AG04450 (cell line): ENCODE measurements at regions of chr7 and their contacts with region 1.

Region 1: DNA sequence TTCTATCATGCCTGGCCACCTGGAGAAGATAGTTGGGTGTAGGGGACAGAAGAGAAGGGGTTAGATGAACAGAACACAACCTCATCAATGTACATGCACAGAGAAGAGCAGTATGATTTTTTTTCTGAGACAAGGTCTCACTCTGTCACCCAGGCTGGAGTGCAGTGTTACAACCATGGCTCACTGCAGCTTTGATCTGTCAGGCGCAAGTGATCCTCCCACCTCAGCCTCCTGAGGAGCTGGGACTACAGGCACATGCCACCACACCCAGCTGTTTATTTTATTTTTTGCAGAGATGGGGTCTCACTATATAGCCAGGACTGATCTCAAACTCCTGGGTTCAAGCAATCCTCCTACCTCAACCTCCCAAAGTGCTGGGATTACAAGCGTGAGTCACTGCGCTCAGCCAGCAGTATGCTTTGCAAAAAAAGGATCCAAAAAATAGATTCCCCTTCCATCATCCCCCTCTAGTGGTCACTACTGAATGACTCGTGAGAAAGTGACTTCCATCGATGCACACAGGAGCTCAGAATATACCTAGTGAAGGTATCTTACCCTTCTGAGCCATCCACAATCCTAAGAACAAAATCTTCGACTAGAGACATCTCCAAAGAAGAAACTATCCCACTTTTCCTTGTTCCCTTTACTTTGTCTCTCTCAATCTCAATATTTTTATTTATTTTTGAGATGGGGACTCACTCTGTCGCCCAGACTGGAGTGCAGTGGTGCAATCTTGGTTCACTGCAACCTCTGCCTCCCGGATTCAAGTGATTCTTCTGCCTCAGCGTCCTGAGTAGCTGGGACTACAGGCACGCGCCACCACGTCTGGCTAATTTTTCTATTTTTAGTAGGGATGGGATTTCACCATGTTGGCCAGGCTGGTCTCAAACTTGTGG is 21.0 kb downstream of the ZCWPW1 start:
- DNase-seq: peak; percentile 41
- H3K4me3 ChIP-seq: no peak overlapping the region
- H3K27ac ChIP-seq: no peak overlapping the region
- H3K27me3 ChIP-seq: peaks cover 29% of the 10 kb centered on the region
- CTCF ChIP-seq: peak; percentile 83

Region 2: DNA sequence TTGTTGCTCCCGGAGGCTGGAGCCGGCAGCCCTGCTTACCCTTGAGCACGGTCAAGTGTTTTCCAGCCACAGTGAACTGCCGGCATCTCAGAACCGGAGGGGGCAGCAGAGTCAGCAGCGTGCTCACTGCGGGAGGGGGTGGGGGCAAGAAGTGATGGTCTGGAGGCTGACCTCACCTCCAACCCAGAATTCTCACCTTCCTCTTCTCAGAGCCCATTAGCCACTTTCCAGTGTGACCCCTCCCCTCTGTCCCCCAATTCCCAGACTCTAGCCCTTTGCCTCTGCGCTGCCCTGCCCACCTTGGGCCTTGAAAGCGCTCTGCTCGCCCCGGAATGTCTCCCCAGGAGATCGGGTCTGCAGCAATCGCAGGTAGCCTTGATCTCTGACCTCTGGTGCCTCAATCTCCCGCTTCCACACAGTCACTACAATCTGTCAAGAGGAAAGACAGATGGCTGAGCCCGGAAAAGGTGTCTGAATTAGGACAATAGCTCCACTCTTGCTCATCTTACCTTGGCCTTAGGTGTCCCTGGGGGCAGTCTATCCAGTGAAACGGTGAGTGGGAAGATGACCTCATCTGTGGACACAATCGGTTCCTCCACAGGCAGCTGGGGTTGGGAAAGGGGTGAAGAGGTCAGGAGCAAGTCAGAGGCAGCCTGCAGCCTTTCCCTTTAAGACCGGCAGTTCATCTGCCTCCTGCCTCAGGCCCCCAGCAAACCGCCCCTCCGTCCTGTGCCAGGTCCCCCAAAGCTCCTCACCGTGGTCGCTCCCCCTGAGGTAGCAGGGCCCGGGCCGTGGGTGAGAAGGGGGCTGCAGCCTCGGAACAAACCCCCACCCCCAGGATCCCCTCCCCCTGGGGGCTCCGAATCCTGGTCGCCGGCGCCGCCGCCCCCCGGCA is 250.0 kb before region 1 on chr7:
- CTCF ChIA-PET with region 1: no interaction called
- POLR2A ChIA-PET with region 1: no interaction called
- DNase-seq: no peak
- H3K4me3 ChIP-seq: peak overlapping the region; percentile 69
- H3K27ac ChIP-seq: peak overlapping the region; percentile 39
- H3K27me3 ChIP-seq: no peaks in the 10 kb centered on the region
- CTCF ChIP-seq: peak; percentile 37

Region 3: GRCh38 chr7:100167921-100168323 is 239.6 kb before region 1 on chr7:
- CTCF ChIA-PET with region 1: interaction called, 12 read pairs
- POLR2A ChIA-PET with region 1: no interaction called
- DNase-seq: no peak
- H3K4me3 ChIP-seq: peak overlapping the region; percentile 63
- H3K27ac ChIP-seq: no peak overlapping the region
- H3K27me3 ChIP-seq: peaks cover 2% of the 10 kb centered on the region
- CTCF ChIP-seq: no peak

Region 4: DNA sequence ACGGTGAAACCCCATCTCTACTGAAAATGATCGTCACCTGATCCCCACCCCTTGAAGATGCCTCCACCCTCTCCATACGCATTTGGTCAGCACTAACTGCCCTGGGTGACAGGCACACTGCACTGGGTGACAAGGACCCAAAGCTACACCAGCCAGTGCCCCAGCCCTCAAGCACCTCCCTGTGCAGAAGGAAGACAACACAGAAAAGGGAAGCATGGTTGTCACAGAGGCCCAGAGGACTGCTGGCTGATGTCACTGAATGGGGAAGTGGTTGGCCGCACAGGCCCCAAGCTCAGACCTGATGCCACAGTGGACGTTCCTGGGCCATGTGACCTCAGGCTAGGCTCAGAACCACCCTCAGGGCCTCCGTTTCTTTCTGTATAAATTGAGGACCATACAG is 38.4 kb before region 1 on chr7:
- CTCF ChIA-PET with region 1: no interaction called
- POLR2A ChIA-PET with region 1: no interaction called
- DNase-seq: no peak
- H3K4me3 ChIP-seq: no peak overlapping the region
- H3K27ac ChIP-seq: no peak overlapping the region
- H3K27me3 ChIP-seq: no peaks in the 10 kb centered on the region
- CTCF ChIP-seq: no peak

Region 5: DNA sequence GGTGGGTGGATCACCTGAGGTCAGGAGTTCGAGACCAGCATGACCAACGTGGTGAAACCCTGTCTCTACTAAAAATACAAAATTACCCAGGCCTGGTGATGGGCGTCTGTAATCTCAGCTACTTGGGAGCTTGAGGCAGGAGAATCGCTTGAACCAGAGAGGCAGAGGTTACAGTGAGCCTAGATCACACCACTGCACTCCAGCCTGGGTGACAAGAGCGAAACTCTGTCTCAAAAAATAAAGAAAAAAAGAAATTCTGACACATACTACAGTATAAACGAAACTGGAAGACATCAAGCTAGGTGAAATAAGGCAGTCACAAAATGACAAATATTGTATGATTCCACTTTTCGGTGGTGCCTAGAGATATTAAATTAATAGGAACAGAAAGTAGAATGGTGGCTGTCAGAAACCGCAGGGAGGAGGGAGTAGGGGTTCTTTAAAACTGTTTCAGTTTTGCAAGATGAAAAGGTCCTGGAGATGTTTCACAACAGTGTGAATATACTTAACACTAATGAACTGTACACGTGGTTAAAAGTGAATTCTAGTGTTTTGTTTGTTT is 11.0 kb before region 1 on chr7:
- CTCF ChIA-PET with region 1: interaction called, 11 read pairs
- POLR2A ChIA-PET with region 1: no interaction called
- DNase-seq: no peak
- H3K4me3 ChIP-seq: no peak overlapping the region
- H3K27ac ChIP-seq: no peak overlapping the region
- H3K27me3 ChIP-seq: peaks cover 51% of the 10 kb centered on the region
- CTCF ChIP-seq: no peak

Region 6: GRCh38 chr7:100423315-100423714 is 15.8 kb after region 1 on chr7:
- CTCF ChIA-PET with region 1: interaction called, 12 read pairs
- POLR2A ChIA-PET with region 1: interaction called, 5 read pairs
- DNase-seq: no peak
- H3K4me3 ChIP-seq: no peak overlapping the region
- H3K27ac ChIP-seq: no peak overlapping the region
- H3K27me3 ChIP-seq: no peaks in the 10 kb centered on the region
- CTCF ChIP-seq: no peak

Region 7: DNA sequence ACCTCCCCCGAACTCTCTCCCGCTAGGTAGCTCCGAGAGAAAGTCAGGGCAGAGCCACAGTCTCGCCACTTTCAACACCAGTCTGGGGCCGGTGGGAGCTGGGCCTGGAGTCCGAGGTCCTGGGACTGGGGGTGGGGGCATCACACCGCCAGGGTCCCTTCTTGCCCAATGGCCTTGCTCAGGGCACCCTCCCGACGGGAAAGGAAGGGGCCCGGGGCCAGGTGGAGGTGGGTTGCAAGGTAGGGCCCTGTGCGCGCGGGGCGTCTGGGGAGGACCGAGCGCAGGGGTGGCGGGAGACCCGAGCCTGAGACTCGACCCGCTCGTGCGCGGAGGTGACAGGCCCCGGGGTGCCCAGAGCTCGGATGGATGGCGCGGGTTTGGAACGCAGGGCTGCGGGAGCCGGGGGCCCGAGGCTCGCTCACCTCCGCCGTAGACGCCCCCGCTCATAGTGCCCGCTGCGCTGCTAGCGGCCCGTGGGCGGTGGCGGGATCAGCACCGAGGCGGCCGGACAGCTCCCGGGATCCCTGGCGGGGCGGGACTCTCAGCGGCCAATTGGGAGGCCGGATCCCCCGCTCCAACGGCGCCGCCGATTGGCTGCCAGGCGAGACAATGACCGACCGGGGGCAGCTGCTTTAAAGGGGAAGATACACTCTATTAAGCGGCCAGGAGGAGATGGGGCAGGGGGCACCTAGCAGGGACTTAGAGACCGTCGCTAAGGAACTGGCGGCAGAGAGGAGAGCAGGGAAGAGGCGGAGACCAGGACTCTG is 248.6 kb after region 1 on chr7 and contains the start of gene ACTL6B:
- CTCF ChIA-PET with region 1: no interaction called
- POLR2A ChIA-PET with region 1: no interaction called
- DNase-seq: no peak
- H3K4me3 ChIP-seq: no peak within 1 kb of the TSS
- H3K27ac ChIP-seq: no peak within 1 kb of the TSS
- H3K27me3 ChIP-seq: peaks cover 23% of the 10 kb centered on the region
- CTCF ChIP-seq: no peak
- polyA plus RNA-seq, gene ACTL6B: not detected in 2 replicates